Activated CD4-positive, alpha-beta memory T cell treated with anti-CD3 and anti-CD28 coated beads for 36 hours (primary cell): ENCODE measurements at regions of chr10 and their contacts with region 1.

Region 1: GRCh38 chr10:93816123-93816747 is 58.5 kb downstream of the LGI1 start:
- DNase-seq: peak; percentile 57
- H3K4me3 Mint-ChIP-seq: no peak overlapping the region
- H3K27ac Mint-ChIP-seq: no peak overlapping the region
- H3K4me1 Mint-ChIP-seq: no peaks in the 10 kb centered on the region
- H3K27me3 Mint-ChIP-seq: peaks cover 36% of the 10 kb centered on the region

Region 2: DNA sequence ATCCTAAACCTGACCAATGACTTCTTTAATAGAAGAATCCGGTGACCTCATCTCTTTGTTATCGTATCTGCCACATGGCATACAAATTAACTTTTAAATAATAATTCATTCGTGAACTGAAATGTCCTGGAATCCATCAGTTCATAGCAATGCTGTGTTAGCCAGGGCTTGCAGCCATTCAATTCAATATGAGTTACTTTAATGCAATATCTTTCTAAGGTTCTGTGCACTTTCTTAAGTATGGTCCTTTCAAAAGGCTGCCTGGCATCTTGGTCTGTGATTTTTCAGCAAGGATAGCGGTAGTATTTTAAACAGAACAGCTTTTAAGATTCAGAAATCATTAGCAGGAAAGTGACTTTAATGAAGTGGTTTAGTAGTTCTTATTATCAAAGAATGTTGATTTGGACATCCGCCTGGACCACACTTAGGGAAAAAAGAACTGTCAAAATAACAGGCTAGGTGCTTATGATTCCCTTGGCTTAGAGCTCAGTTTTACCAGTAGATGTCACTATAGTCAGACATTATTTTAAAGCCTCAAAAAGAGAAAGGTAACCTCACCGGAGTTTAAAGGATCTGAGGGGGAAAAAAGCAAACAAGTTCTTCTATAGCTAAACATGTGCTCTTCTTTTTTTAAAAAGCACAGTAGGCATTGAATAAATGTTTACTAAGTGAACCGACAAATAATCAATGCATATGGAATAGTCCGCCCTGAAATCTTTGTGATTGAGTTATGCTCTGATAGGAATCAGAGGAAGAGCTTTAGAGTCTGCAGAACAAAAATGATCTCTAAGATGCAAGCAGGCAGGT is 100.2 kb after region 1 on chr10:
- CTCF ChIA-PET with region 1: no interaction called
- POLR2A ChIA-PET with region 1: no interaction called
- intact Hi-C with region 1: loop called (anchors 10 kb)
- DNase-seq: no peak
- H3K4me3 Mint-ChIP-seq: no peak overlapping the region
- H3K27ac Mint-ChIP-seq: no peak overlapping the region
- H3K4me1 Mint-ChIP-seq: no peaks in the 10 kb centered on the region
- H3K27me3 Mint-ChIP-seq: no peaks in the 10 kb centered on the region